ENCODE measurements at regions of chr15 and their contacts with region 1.

Region 1: DNA sequence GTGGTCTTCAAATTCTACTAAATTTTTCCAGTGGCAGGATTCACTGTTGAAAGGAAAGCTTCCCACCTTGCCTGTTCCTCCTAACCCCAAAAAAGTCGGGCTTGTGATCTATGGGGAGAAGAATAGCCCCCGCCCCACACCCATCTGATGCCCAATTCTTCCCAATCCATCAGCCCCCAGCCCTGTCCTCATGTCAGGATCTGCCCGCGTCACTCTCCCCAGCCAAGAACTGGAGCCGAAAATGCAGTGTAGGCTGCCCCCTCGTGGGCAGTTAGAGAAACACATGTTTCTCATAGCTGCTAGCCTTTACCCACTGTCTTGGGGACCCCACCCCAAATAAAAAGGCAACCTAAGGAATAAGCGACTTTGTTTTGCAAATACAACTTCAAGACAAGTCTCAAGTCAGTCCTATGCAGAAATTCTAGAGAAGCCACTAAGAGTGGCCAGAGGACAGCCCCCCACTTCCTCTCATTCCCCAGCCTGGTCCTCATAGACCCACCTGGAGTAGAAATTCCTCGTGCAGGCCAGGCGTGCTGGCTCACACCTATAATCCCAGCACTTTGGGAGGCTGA is 13.0 kb upstream of the CSK start:
- DNase-seq: no peak
- H3K4me3 ChIP-seq: no peak overlapping the region
- H3K27me3 ChIP-seq: peaks cover 3% of the 10 kb centered on the region
- CTCF ChIP-seq: peak; percentile 77

Region 2: GRCh38 chr15:74373731-74374647 is 394.9 kb before region 1 on chr15:
- CTCF ChIA-PET with region 1: interaction called, 57 read pairs
- POLR2A ChIA-PET with region 1: no interaction called
- DNase-seq: no peak
- H3K4me3 ChIP-seq: peak overlapping the region; percentile 69
- H3K27me3 ChIP-seq: peaks cover 5% of the 10 kb centered on the region
- CTCF ChIP-seq: peak; percentile 88

Region 3: DNA sequence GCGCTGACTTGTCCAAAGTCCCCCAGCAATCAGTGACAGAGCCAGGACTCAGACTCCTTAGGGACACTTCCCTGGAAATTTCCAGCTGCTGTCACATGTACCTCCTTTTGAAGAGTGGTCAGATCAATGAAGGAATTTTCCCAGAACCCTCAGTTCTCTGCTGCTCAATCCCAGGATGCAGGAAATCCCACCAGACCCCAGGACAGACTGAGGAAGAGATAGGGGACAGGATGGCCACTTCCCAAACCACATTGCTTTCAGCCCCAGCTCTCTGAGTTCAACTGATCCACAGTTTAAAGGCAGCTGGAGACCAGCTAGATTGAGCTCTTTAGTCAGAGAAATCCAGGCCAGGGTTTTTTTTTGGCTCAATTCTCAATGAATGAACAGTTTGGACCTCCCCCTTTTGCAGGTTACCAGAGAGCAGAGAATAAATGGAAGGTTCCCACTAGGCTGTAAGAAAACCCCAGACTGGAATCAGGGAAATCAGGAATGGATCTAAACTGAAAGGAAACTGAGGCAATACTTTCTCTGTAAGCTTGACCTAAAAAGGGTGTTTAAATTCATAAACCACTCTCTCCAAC is 45.0 kb before region 1 on chr15:
- CTCF ChIA-PET with region 1: interaction called, 10 read pairs
- POLR2A ChIA-PET with region 1: no interaction called
- DNase-seq: no peak
- H3K4me3 ChIP-seq: no peak overlapping the region
- H3K27me3 ChIP-seq: peaks cover 20% of the 10 kb centered on the region
- CTCF ChIP-seq: no peak

Region 4: GRCh38 chr15:74781431-74782258 is 12.8 kb after region 1 on chr15 and contains the start of gene CSK:
- CTCF ChIA-PET with region 1: interaction called, 137 read pairs
- POLR2A ChIA-PET with region 1: no interaction called
- DNase-seq: no peak
- H3K4me3 ChIP-seq: peak within 1 kb of the TSS; percentile 89
- H3K27me3 ChIP-seq: no peaks in the 10 kb centered on the region
- CTCF ChIP-seq: peak; percentile 48
- polyA plus RNA-seq, gene CSK: 15.1 and 25.3 TPM in 2 replicates

Region 5: GRCh38 chr15:74793135-74794028 is 24.5 kb after region 1 on chr15:
- CTCF ChIA-PET with region 1: interaction called, 19 read pairs
- POLR2A ChIA-PET with region 1: no interaction called
- DNase-seq: no peak
- H3K4me3 ChIP-seq: no peak overlapping the region
- H3K27me3 ChIP-seq: no peaks in the 10 kb centered on the region
- CTCF ChIP-seq: peak; percentile 24; the same call in 1 of the 2 replicates

Region 6: GRCh38 chr15:74835307-74835823 is 66.5 kb after region 1 on chr15:
- CTCF ChIA-PET with region 1: interaction called, 10 read pairs
- POLR2A ChIA-PET with region 1: no interaction called
- DNase-seq: no peak
- H3K4me3 ChIP-seq: no peak overlapping the region
- H3K27me3 ChIP-seq: no peaks in the 10 kb centered on the region
- CTCF ChIP-seq: peak; percentile 86

Region 7: GRCh38 chr15:74950078-74951000 is 181.5 kb after region 1 on chr15:
- CTCF ChIA-PET with region 1: interaction called, 205 read pairs
- POLR2A ChIA-PET with region 1: no interaction called
- DNase-seq: no peak
- H3K4me3 ChIP-seq: no peak overlapping the region
- H3K27me3 ChIP-seq: no peaks in the 10 kb centered on the region
- CTCF ChIP-seq: peak; percentile 99

Region 8: GRCh38 chr15:75420698-75421097 is 651.8 kb after region 1 on chr15:
- CTCF ChIA-PET with region 1: no interaction called
- POLR2A ChIA-PET with region 1: no interaction called
- DNase-seq: no peak
- H3K4me3 ChIP-seq: no peak overlapping the region
- H3K27me3 ChIP-seq: no peaks in the 10 kb centered on the region
- CTCF ChIP-seq: no peak